T-cell (primary cell): ENCODE measurements at regions of chr4 and their contacts with region 1.

Region 1: GRCh38 chr4:122450847-122451246 is 5.7 kb downstream of the IL2 start:
- DNase-seq: peak in 1 of 35 experiments; percentile 34
- ATAC-seq: peak in 2 of 4 experiments; percentile 30 to 50
- H3K4me3 ChIP-seq: no peak overlapping the region
- H3K4me3 Mint-ChIP-seq: no peak overlapping the region
- H3K27ac ChIP-seq: no peak overlapping the region
- H3K27ac Mint-ChIP-seq: no peak overlapping the region
- H3K4me1 ChIP-seq: peaks cover 0 to 12% of the 10 kb centered on the region in 2 experiments
- H3K4me1 Mint-ChIP-seq: peaks cover 24 to 26% (median 25%) of the 10 kb centered on the region in 3 donors
- H3K27me3 ChIP-seq: no peaks in the 10 kb centered on the region
- H3K27me3 Mint-ChIP-seq: no peaks in the 10 kb centered on the region

Region 2: GRCh38 chr4:121373841-121374240 is 1077.0 kb before region 1 on chr4:
- CTCF ChIA-PET with region 1: interaction called in 1 of 2 experiments, 10 read pairs
- POLR2A ChIA-PET with region 1: no interaction called
- DNase-seq: no peak
- ATAC-seq: no peak
- H3K4me3 ChIP-seq: no peak overlapping the region
- H3K4me3 Mint-ChIP-seq: no peak overlapping the region
- H3K27ac ChIP-seq: no peak overlapping the region
- H3K27ac Mint-ChIP-seq: no peak overlapping the region
- H3K4me1 ChIP-seq: no peaks in the 10 kb centered on the region
- H3K4me1 Mint-ChIP-seq: no peaks in the 10 kb centered on the region
- H3K27me3 ChIP-seq: peaks cover 5 to 10% of the 10 kb centered on the region in 2 experiments
- H3K27me3 Mint-ChIP-seq: peaks cover 26 to 35% of the 10 kb centered on the region in 2 donors

Region 3: DNA sequence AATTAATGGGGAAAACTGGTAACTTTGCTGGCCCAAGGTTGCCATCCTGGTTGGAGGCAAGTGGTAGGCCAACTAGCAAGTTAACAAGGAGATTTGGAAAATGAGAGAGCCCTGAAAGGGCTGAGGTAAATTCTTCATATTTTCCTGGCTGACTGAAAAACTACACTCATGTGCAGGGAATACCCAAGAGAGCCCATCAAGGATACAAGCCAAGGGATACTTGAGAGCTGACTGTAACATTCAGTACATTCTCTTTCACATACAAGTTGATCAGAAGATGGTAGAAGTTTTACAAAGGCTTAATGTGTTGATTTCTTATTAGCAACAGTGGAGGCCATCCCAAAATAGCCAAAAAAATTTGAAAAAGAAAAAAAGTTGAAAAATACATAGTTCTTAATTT is 27.6 kb before region 1 on chr4:
- CTCF ChIA-PET with region 1: no interaction called
- POLR2A ChIA-PET with region 1: no interaction called
- DNase-seq: no peak
- ATAC-seq: no peak
- H3K4me3 ChIP-seq: no peak overlapping the region
- H3K4me3 Mint-ChIP-seq: no peak overlapping the region
- H3K27ac ChIP-seq: no peak overlapping the region
- H3K27ac Mint-ChIP-seq: no peak overlapping the region
- H3K4me1 ChIP-seq: no peaks in the 10 kb centered on the region
- H3K4me1 Mint-ChIP-seq: no peaks in the 10 kb centered on the region
- H3K27me3 ChIP-seq: no peaks in the 10 kb centered on the region
- H3K27me3 Mint-ChIP-seq: peaks cover 0 to 3% of the 10 kb centered on the region in 2 donors

Region 4: GRCh38 chr4:123168812-123169211 is 718.0 kb after region 1 on chr4:
- CTCF ChIA-PET with region 1: no interaction called
- POLR2A ChIA-PET with region 1: no interaction called
- DNase-seq: no peak
- ATAC-seq: no peak
- H3K4me3 ChIP-seq: no peak overlapping the region
- H3K4me3 Mint-ChIP-seq: no peak overlapping the region
- H3K27ac ChIP-seq: no peak overlapping the region
- H3K27ac Mint-ChIP-seq: no peak overlapping the region
- H3K4me1 ChIP-seq: no peaks in the 10 kb centered on the region
- H3K4me1 Mint-ChIP-seq: no peaks in the 10 kb centered on the region
- H3K27me3 ChIP-seq: no peaks in the 10 kb centered on the region
- H3K27me3 Mint-ChIP-seq: no peaks in the 10 kb centered on the region